Endothelial cell of umbilical vein (primary cell): ENCODE measurements at regions of chrX and their contacts with region 1.

Region 1: GRCh38 chrX:41759817-41760216 is 35.8 kb downstream of the GPR82 start:
- DNase-seq: peak; percentile 45
- H3K4me3 ChIP-seq: no peak overlapping the region
- H3K27ac ChIP-seq: no peak overlapping the region
- H3K4me1 ChIP-seq: peaks cover 2% of the 10 kb centered on the region
- H3K27me3 ChIP-seq: no peaks in the 10 kb centered on the region
- CTCF ChIP-seq: peak; percentile 18 to 24
- POLR2A ChIP-seq: no peak

Region 2: GRCh38 chrX:41561045-41561444 is 198.8 kb before region 1 on chrX:
- CTCF ChIA-PET with region 1: interaction called, 35 read pairs
- POLR2A ChIA-PET with region 1: no interaction called
- dilution Hi-C with region 1: no loop called
- intact Hi-C with region 1: loop called (anchors 1 kb)
- DNase-seq: peak; percentile 79
- H3K4me3 ChIP-seq: no peak overlapping the region
- H3K27ac ChIP-seq: peak overlapping the region; percentile 62
- H3K4me1 ChIP-seq: peaks cover 15% of the 10 kb centered on the region
- H3K27me3 ChIP-seq: no peaks in the 10 kb centered on the region
- CTCF ChIP-seq: no peak
- POLR2A ChIP-seq: no peak

Region 3: GRCh38 chrX:41827886-41828285 is 68.1 kb after region 1 on chrX:
- CTCF ChIA-PET with region 1: no interaction called
- POLR2A ChIA-PET with region 1: no interaction called
- dilution Hi-C with region 1: no loop called
- intact Hi-C with region 1: no loop called
- DNase-seq: no peak
- H3K4me3 ChIP-seq: no peak overlapping the region
- H3K27ac ChIP-seq: no peak overlapping the region
- H3K4me1 ChIP-seq: no peaks in the 10 kb centered on the region
- H3K27me3 ChIP-seq: no peaks in the 10 kb centered on the region
- CTCF ChIP-seq: no peak
- POLR2A ChIP-seq: no peak